ENCODE measurements at regions of chr10 and their contacts with region 1.

Region 1: DNA sequence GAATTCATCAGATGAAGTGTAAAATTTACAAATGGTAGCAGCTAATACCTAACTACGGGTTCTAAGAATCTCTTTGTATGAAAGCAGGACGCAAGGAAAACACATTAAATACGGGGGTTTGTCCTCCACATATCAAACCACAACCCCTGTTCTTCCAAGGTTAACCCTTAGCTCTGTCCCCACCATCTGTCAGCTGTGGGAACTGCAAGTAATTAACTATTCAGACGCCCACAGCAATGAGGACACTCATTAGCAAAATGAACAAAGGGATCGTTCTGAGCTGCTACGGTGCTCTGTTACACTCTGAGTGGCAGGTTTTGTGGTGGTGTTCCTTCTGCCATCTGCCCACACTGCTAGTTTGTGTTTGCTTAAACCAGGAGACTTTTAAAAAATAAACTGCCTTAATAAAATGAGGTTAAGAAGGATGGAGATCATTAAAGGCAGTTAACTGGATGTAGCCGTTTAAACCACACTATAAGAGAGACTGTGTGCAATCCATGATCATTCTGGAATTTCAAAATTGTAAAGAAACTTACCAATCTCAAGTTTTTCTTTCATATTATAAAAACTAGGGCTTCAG is 51.4 kb downstream of the C10orf67 start:
- DNase-seq: peak; percentile 52
- CTCF ChIP-seq: peak; percentile 31

Region 2: GRCh38 chr10:23158370-23158769 is 134.9 kb before region 1 on chr10:
- in situ Hi-C with region 1: loop called (anchors 25 kb)
- DNase-seq: peak; percentile 84
- CTCF ChIP-seq: peak; percentile 77

Measured in GM13976 (cell line).